ENCODE measurements at regions of chr3 and their contacts with region 1.

Region 1: GRCh38 chr3:129606636-129607390 is at the start of gene PLXND1:
- DNase-seq: peak in 1 of 2 experiments; percentile 78
- H3K4me3 ChIP-seq: peak within 1 kb of the TSS; percentile 46 to 76 (median 62)
- H3K27ac ChIP-seq: no peak within 1 kb of the TSS
- H3K4me1 ChIP-seq: peaks cover 4 to 52% (median 43%) of the 10 kb centered on the region in 4 experiments
- H3K27me3 ChIP-seq: peaks cover 7 to 31% (median 22%) of the 10 kb centered on the region in 4 experiments; a peak in 6 of 7 replicates
- CTCF ChIP-seq: no peak
- EP300 ChIP-seq: no peak
- POLR2A ChIP-seq: no peak
- RAD21 ChIP-seq: no peak
- total RNA-seq, gene PLXND1: 60.2 and 66.4 TPM in 2 replicates

Region 2: DNA sequence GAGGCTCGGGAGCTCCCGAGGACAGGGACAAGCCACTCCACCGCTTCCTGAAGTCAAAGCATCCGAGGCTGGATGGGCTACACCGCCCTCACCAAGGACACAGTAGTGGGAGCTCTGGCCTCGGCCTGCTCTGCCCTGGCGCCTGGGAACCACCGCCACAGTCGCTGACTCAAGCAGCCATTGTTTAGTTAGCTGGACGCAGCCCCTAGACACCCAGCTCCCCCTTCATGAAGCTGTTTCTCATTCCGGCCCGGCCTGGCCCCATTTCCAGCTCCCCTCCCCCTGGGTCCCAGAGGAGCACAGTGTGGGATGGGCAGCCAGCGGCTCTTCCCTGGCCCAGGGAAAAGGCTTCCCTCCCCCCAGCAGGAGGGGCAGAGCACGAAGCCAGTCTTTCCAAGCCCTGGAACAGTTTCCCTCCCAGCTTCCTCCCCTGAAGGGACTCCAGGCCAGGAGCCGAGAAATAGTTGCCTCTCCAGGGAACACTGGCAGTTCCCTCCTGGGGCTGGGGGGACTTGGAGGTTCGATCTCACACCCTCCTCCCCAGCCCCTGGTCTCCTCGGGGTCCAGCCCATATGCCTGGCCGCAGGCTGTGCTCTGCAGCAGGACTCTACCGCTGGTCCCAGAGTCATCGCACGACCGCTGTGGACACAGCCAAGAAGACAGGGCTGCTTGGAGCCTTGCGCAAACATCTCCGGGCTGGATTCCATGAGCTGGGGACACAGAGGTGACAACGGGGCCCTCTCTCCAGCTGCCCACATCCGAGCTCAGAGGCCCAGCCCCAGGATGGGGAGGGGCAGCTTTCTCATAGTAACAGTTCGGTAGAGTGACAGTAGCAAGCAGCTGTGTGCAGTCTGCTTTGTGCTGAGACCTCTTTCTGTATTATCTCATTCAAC is 10.4 kb before region 1 on chr3:
- CTCF ChIA-PET with region 1: interaction called, 11 read pairs
- POLR2A ChIA-PET with region 1: interaction called, 17 read pairs
- DNase-seq: no peak
- H3K4me3 ChIP-seq: no peak overlapping the region
- H3K27ac ChIP-seq: no peak overlapping the region
- H3K4me1 ChIP-seq: peaks cover 18 to 63% (median 56%) of the 10 kb centered on the region in 4 experiments
- H3K27me3 ChIP-seq: no peaks in the 10 kb centered on the region
- CTCF ChIP-seq: no peak
- EP300 ChIP-seq: no peak
- POLR2A ChIP-seq: no peak
- RAD21 ChIP-seq: no peak